ENCODE measurements at regions of chr19 and their contacts with region 1.

Region 1: DNA sequence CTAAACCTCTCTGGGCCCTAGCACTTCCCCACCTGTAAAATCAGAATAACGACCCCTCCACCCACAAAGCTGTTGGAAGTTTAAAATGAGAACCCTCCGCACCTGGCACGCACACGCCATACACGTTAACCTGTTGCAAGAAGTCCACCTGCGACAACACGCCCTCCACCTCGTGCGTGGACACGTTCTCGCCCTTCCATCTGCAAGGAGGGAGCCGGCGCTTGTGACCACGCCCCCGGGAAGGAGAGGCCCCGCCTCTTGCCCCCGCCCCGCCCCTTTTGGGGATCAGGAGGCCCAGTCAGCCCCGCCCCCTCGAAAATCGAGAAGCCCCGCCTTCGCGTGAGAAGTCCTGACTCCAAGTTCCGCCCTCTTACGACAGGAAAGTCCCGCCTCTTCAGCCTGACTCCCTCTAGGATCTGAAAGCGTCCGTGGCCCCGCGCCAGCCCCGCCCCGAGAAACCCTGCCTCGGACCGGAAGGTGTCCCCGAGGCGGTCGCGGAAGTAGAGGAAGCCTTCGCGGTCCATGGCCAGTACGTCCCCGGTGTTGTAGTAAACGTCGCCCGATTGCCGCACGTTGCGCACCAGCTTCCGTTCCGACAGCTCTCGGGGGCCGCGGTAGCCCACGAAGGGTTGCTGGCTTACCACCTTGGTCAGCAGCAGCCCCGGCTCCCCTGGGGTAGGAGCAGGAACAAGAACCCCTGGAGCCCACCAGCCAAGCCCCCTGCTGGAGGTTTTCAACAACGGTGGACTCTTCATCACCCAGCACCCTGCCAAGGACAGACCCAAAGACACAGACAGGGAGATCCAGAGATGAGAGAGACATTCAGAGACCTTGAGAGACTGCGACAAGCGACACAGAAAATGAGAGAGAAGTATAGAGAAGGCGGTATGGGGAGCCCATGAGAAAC is 12.5 kb downstream of the SLC27A5 start:
- DNase-seq: peak; percentile 76 to 96 (median 87)
- ATAC-seq: peak; percentile 93
- H3K4me3 ChIP-seq: peak overlapping the region; percentile 66
- H3K4me3 Mint-ChIP-seq: peak overlapping the region; percentile 88 to 98 (median 94)
- H3K27ac ChIP-seq: peak overlapping the region; percentile 72
- H3K27ac Mint-ChIP-seq: peak overlapping the region; percentile 90 to 97 (median 95)
- H3K4me1 ChIP-seq: peaks cover 12 to 15% of the 10 kb centered on the region in 2 donors
- H3K4me1 Mint-ChIP-seq: peaks cover 8 to 32% (median 21%) of the 10 kb centered on the region in 7 donors
- H3K27me3 ChIP-seq: no peaks in the 10 kb centered on the region
- H3K27me3 Mint-ChIP-seq: no peaks in the 10 kb centered on the region

Region 2: GRCh38 chr19:58261968-58262921 is 237.0 kb before region 1 on chr19:
- CTCF ChIA-PET with region 1: no interaction called
- POLR2A ChIA-PET with region 1: no interaction called
- intact Hi-C with region 1: no loop called
- DNase-seq: no peak
- ATAC-seq: no peak
- H3K4me3 ChIP-seq: peak overlapping the region; percentile 33
- H3K4me3 Mint-ChIP-seq: no peak overlapping the region
- H3K27ac ChIP-seq: no peak overlapping the region
- H3K27ac Mint-ChIP-seq: peak overlapping the region in 1 of 9 donors; percentile 18
- H3K4me1 ChIP-seq: no peaks in the 10 kb centered on the region
- H3K4me1 Mint-ChIP-seq: peaks cover 0 to 4% (median 0%) of the 10 kb centered on the region in 7 donors
- H3K27me3 ChIP-seq: no peaks in the 10 kb centered on the region
- H3K27me3 Mint-ChIP-seq: no peaks in the 10 kb centered on the region

Region 3: DNA sequence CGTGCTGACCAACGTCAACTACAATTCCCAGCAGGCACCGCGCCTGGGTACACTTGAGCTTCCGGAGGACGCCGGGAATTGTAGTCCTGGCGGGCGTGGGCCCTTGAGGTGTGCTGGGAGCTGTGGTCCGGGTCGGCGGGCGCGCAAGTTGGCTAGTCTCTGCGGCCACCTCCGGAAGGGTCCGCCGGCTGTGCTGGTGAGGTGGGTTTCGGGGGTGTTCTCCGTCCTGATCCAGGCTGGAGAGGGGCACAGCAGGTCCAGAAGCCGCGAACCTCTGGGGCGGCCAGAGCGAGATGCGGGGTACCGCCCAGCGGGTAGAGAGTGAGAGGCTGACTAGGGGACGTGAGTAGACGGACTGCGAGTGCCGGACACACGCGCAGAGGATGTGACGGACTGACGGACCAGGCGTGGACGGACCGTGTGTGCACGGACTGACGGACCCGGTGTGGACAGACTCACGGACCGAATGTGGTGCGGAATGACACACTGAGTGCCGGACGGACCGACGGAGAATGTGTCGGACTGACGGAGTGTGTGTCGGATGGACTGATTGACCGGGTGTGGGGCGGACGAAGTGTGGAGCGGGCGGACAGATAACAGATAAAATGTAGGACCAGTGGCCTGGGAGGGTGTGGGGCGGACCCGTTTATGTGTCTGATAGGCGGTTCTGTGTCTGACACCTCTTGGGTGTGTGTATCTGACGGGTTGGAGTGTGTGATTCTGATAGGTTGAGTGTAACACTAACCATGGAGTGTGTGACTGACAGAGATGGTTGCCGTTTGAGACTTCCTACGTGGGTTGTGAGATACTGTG is 172.2 kb before region 1 on chr19 and contains the start of gene ZSCAN22:
- CTCF ChIA-PET with region 1: no interaction called
- POLR2A ChIA-PET with region 1: no interaction called
- intact Hi-C with region 1: loop called in 1 of 2 experiments (anchors 1 kb)
- DNase-seq: peak; percentile 65 to 89 (median 78)
- ATAC-seq: peak; percentile 90
- H3K4me3 ChIP-seq: peak within 1 kb of the TSS; percentile 95
- H3K4me3 Mint-ChIP-seq: no peak within 1 kb of the TSS
- H3K27ac ChIP-seq: peak within 1 kb of the TSS; percentile 72
- H3K27ac Mint-ChIP-seq: no peak within 1 kb of the TSS
- H3K4me1 ChIP-seq: peaks cover 14 to 16% of the 10 kb centered on the region in 2 donors
- H3K4me1 Mint-ChIP-seq: peaks cover 0 to 10% (median 6%) of the 10 kb centered on the region in 7 donors
- H3K27me3 ChIP-seq: no peaks in the 10 kb centered on the region
- H3K27me3 Mint-ChIP-seq: no peaks in the 10 kb centered on the region
- total RNA-seq, gene ZSCAN22: 1.1 to 6.0 (median 4.5) TPM

Region 4: DNA sequence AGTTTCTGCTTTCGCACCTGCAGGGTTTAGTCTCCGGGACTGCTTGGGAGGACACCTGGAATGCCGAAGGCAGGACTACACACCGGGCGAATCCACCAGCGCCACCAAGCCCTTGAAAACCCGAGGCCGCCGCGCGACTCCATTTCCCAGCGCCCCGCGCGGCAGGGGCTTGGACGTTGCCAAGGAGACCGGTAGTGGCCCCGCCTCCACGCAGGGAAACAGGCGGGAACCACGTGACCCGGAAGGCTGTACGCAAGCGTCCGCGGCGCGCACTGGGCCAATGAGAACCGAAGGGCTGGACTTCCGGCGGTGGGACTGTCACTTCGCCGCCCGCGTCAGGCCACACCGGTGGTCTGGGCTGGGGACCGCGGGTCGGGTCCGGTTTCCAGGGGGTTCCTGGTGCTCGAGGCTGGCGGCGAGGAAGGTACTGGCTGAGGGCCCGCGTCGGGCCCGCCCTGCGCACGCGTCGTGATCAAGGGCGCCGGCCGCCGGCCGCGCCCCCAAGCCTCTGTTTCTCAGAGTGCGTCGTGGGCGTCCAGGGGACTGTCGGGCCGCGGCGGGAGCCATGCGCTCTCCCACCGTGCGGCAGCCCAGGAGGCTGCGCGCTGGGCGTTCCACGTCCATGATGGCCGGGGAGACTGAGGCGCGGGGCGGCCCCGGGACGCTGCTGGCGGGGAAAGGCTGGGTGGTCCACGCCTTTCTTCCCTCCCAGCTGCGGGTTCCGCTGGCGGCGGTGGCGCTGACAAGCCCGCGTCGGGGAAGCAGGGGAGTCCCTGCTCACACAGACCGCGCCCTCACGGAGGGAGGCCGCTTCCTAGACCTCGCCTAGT is 32.3 kb before region 1 on chr19 and contains the start of gene ZNF324:
- CTCF ChIA-PET with region 1: no interaction called
- POLR2A ChIA-PET with region 1: interaction called, 4 read pairs
- intact Hi-C with region 1: loop called (anchors 1 to 2 kb)
- DNase-seq: peak; percentile 92 to 97 (median 95)
- ATAC-seq: peak; percentile 98
- H3K4me3 ChIP-seq: peak within 1 kb of the TSS; percentile 92
- H3K4me3 Mint-ChIP-seq: peak within 1 kb of the TSS; percentile 80 to 89 (median 86)
- H3K27ac ChIP-seq: peak within 1 kb of the TSS; percentile 99
- H3K27ac Mint-ChIP-seq: peak within 1 kb of the TSS in 8 of 9 donors; percentile 67 to 91 (median 85)
- H3K4me1 ChIP-seq: peaks cover 7 to 11% of the 10 kb centered on the region in 2 donors
- H3K4me1 Mint-ChIP-seq: peaks cover 14 to 27% (median 22%) of the 10 kb centered on the region in 7 donors
- H3K27me3 ChIP-seq: no peaks in the 10 kb centered on the region
- H3K27me3 Mint-ChIP-seq: peaks cover 0 to 3% (median 0%) of the 10 kb centered on the region in 5 donors
- total RNA-seq, gene ZNF324: 14.2 to 28.0 (median 23.4) TPM

Region 5: DNA sequence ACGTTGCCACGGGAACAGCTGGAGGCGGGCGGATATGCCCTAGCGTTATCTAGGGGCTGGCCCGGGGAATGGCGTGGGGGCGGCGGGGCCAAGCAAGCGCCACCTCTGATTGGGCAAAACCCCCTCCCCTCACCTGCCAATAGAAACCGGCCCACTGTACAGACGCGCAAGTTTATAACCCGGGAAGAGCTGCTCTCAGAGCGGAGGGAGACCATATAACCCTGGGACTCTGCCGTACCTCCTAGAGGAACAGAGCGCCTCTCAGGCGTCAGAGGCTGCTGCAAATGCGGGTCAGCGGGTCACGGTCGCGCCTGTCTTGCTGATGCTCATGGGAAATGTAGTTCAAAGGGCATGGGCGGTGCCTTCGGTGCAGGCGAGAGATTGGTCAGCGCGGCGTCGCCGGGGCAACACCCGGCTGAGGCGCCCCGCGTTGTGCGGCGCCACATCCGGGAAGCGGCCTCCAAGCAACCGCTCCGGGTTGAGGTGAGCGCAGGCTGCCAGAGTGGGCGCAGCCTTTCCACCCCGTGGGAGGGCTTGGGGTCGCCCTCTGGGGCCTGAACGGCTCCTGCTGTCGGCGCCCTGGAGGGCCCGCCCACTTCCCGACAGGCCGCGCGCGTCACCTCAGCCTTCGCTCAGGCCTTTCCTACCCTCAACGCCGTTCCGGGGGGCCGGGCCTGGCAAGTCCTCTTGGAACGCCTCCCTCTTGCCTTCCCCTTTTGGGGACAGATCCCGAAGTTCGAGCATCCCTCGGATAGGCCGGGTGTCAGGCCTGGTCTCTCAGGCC is 23.4 kb before region 1 on chr19 and contains the start of gene ZNF446:
- CTCF ChIA-PET with region 1: no interaction called
- POLR2A ChIA-PET with region 1: interaction called, 11 read pairs
- intact Hi-C with region 1: loop called (anchors 1 kb)
- DNase-seq: peak; percentile 84 to 97 (median 96)
- ATAC-seq: peak; percentile 92
- H3K4me3 ChIP-seq: peak within 1 kb of the TSS; percentile 77
- H3K4me3 Mint-ChIP-seq: peak within 1 kb of the TSS; percentile 78 to 99 (median 96)
- H3K27ac ChIP-seq: peak within 1 kb of the TSS; percentile 91
- H3K27ac Mint-ChIP-seq: peak within 1 kb of the TSS; percentile 87 to 100 (median 99)
- H3K4me1 ChIP-seq: peaks cover 14 to 16% of the 10 kb centered on the region in 2 donors
- H3K4me1 Mint-ChIP-seq: peaks cover 6 to 29% (median 17%) of the 10 kb centered on the region in 7 donors
- H3K27me3 ChIP-seq: no peaks in the 10 kb centered on the region
- H3K27me3 Mint-ChIP-seq: no peaks in the 10 kb centered on the region
- total RNA-seq, gene ZNF446: 9.5 to 20.0 (median 15.1) TPM

Region 6: GRCh38 chr19:58513694-58514563 is 14.7 kb after region 1 on chr19:
- CTCF ChIA-PET with region 1: interaction called, 4 read pairs
- POLR2A ChIA-PET with region 1: interaction called, 10 read pairs
- intact Hi-C with region 1: loop called (anchors 1 kb)
- DNase-seq: peak; percentile 91 to 99 (median 95)
- ATAC-seq: peak; percentile 98
- H3K4me3 ChIP-seq: peak overlapping the region; percentile 39
- H3K4me3 Mint-ChIP-seq: peak overlapping the region; percentile 73 to 93 (median 84)
- H3K27ac ChIP-seq: peak overlapping the region; percentile 65
- H3K27ac Mint-ChIP-seq: peak overlapping the region; percentile 67 to 94 (median 85)
- H3K4me1 ChIP-seq: peaks cover 17 to 21% of the 10 kb centered on the region in 2 donors
- H3K4me1 Mint-ChIP-seq: peaks cover 17 to 40% (median 27%) of the 10 kb centered on the region in 7 donors
- H3K27me3 ChIP-seq: no peaks in the 10 kb centered on the region
- H3K27me3 Mint-ChIP-seq: no peaks in the 10 kb centered on the region

Region 7: DNA sequence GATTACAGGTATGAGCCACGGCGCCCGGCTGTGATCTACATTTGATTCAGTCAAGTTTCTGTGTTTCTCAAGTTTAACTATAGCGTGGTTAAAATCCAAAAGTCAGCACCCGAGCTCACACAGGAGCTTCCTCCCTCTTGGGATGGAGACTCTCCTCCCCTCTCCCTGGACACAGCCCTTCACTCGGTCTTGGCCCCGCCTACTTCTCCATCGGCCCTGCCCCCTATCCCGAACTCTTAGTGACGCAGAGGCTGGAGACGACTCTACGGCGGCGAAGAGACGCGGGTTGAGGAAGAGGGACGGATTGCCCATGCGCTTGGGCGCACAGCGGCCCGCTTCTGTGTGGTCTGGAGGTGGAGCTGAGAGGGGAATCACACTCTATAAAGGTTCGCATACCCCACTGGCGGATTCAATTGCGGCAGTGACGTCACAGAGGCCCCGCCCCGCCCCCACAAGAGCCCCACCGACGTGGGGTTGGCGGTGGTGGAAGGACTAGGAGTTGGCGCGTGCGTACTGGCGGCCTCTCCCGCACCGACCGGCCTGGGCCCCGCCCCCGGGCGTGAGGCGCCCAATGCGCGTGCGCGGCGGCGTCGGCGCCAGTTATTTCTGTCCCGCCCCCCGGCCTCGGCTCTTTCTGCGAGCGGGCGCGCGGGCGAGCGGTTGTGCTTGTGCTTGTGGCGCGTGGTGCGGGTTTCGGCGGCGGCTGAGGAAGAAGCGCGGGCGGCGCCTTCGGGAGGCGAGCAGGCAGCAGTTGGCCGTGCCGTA is 44.7 kb after region 1 on chr19 and contains the start of gene TRIM28:
- CTCF ChIA-PET with region 1: no interaction called
- POLR2A ChIA-PET with region 1: no interaction called
- intact Hi-C with region 1: loop called (anchors 1 kb)
- DNase-seq: peak; percentile 100
- ATAC-seq: peak; percentile 92
- H3K4me3 ChIP-seq: peak within 1 kb of the TSS; percentile 97
- H3K4me3 Mint-ChIP-seq: peak within 1 kb of the TSS; percentile 94 to 99 (median 96)
- H3K27ac ChIP-seq: peak within 1 kb of the TSS; percentile 83
- H3K27ac Mint-ChIP-seq: peak within 1 kb of the TSS; percentile 96 to 100 (median 99)
- H3K4me1 ChIP-seq: peaks cover 16% of the 10 kb centered on the region in 2 donors
- H3K4me1 Mint-ChIP-seq: peaks cover 28 to 43% (median 36%) of the 10 kb centered on the region in 7 donors
- H3K27me3 ChIP-seq: no peaks in the 10 kb centered on the region
- H3K27me3 Mint-ChIP-seq: peaks cover 0 to 33% (median 0%) of the 10 kb centered on the region in 5 donors
- total RNA-seq, gene TRIM28: 396 to 564 (median 435) TPM

Region 8: GRCh38 chr19:58572818-58573657 is 73.8 kb after region 1 on chr19 and contains the start of gene MZF1:
- CTCF ChIA-PET with region 1: no interaction called
- POLR2A ChIA-PET with region 1: no interaction called
- intact Hi-C with region 1: loop called (anchors 1 kb)
- DNase-seq: peak; percentile 97 to 100 (median 100)
- ATAC-seq: peak; percentile 81
- H3K4me3 ChIP-seq: peak within 1 kb of the TSS; percentile 71
- H3K4me3 Mint-ChIP-seq: peak within 1 kb of the TSS; percentile 82 to 100 (median 98)
- H3K27ac ChIP-seq: peak within 1 kb of the TSS; percentile 97
- H3K27ac Mint-ChIP-seq: peak within 1 kb of the TSS; percentile 97 to 100 (median 100)
- H3K4me1 ChIP-seq: peaks cover 19 to 20% of the 10 kb centered on the region in 2 donors
- H3K4me1 Mint-ChIP-seq: peaks cover 27 to 50% (median 33%) of the 10 kb centered on the region in 7 donors
- H3K27me3 ChIP-seq: no peaks in the 10 kb centered on the region
- H3K27me3 Mint-ChIP-seq: peaks cover 0 to 4% (median 0%) of the 10 kb centered on the region in 5 donors
- total RNA-seq, gene MZF1: 35.0 to 51.8 (median 44.9) TPM